ENCODE measurements at regions of chr12 and their contacts with region 1.

Region 1: GRCh38 chr12:55142669-55143565 is 16.7 kb downstream of the OR9K2 start:
- DNase-seq: peak; percentile 69
- H3K4me3 Mint-ChIP-seq: no peak overlapping the region
- H3K27ac Mint-ChIP-seq: no peak overlapping the region
- H3K4me1 Mint-ChIP-seq: no peaks in the 10 kb centered on the region
- H3K27me3 Mint-ChIP-seq: no peaks in the 10 kb centered on the region
- CTCF ChIP-seq: peak; percentile 63

Region 2: DNA sequence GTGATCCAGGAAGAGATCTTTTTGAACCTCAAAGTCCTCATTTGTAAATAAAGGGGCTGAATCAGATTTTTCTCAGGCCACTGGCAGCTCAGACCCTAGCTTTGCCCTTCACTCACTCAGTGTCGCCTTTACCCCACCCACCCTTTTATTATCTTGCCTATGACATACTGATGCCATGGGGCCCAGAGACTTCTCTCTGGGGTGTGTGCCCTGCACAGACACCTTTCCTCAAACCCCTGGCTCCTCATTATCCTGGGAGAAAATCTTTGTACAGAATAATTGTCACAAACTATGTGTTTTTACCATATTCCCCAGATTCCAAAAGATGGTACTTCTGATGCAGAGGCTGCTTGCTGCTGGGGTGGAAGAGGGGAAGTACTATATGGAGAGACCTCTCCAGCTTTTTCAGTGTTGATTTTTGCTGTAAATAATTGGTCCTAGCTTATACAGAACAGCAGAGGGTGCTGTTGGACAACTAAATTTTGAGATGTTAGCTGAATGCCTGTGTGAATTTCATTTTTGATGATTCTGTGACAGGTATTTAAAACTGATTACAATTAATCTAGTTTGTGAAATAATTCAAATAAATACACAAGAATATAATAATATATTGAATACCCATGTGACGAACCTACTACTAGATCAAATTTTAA is 440.9 kb before region 1 on chr12:
- CTCF ChIA-PET with region 1: no interaction called
- intact Hi-C with region 1: loop called (anchors 5 kb)
- DNase-seq: peak; percentile 25
- H3K4me3 Mint-ChIP-seq: no peak overlapping the region
- H3K27ac Mint-ChIP-seq: no peak overlapping the region
- H3K4me1 Mint-ChIP-seq: no peaks in the 10 kb centered on the region
- H3K27me3 Mint-ChIP-seq: peaks cover 76% of the 10 kb centered on the region
- CTCF ChIP-seq: peak; percentile 50

Region 3: DNA sequence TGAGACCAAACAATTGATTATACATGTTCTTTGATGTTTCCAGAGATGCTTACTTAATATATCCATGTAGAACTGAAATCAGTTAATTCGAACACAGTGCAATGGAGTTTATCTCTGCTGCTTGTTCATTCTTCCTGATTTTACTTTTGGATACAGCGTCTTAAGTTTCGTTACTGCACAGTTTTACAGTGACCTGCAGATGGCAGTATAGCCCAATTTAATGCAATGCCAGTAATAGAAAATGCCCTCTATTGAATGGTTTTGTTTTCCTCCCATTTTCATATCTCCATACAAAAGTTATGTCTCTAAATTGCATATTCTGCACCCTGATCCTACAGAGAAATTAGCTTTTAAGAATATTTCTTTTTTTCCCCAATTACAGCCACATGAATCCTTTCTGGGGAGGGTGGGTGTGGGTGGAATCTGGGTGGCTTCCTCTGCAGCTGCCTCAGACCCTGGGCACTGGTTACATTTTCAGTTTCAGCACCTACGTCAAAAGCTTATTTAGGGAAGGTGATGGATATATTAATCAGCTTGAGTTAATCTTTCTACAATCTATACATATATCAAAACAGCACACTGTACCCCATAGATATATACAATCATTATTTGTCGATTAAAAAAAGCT is 393.6 kb before region 1 on chr12:
- CTCF ChIA-PET with region 1: no interaction called
- intact Hi-C with region 1: loop called (anchors 1 kb)
- DNase-seq: peak; percentile 59
- H3K4me3 Mint-ChIP-seq: no peak overlapping the region
- H3K27ac Mint-ChIP-seq: no peak overlapping the region
- H3K4me1 Mint-ChIP-seq: no peaks in the 10 kb centered on the region
- H3K27me3 Mint-ChIP-seq: peaks cover 42% of the 10 kb centered on the region
- CTCF ChIP-seq: peak; percentile 78

Region 4: GRCh38 chr12:54840317-54840771 is 302.6 kb before region 1 on chr12:
- CTCF ChIA-PET with region 1: no interaction called
- intact Hi-C with region 1: loop called (anchors 10 kb)
- DNase-seq: no peak
- H3K4me3 Mint-ChIP-seq: no peak overlapping the region
- H3K27ac Mint-ChIP-seq: no peak overlapping the region
- H3K4me1 Mint-ChIP-seq: no peaks in the 10 kb centered on the region
- H3K27me3 Mint-ChIP-seq: peaks cover 29% of the 10 kb centered on the region
- CTCF ChIP-seq: no peak

Region 5: GRCh38 chr12:54993161-54993835 is 149.6 kb before region 1 on chr12:
- CTCF ChIA-PET with region 1: interaction called, 3 read pairs
- intact Hi-C with region 1: loop called (anchors 1 kb)
- DNase-seq: peak; percentile 60
- H3K4me3 Mint-ChIP-seq: no peak overlapping the region
- H3K27ac Mint-ChIP-seq: no peak overlapping the region
- H3K4me1 Mint-ChIP-seq: no peaks in the 10 kb centered on the region
- H3K27me3 Mint-ChIP-seq: peaks cover 67% of the 10 kb centered on the region
- CTCF ChIP-seq: peak; percentile 75

Region 6: DNA sequence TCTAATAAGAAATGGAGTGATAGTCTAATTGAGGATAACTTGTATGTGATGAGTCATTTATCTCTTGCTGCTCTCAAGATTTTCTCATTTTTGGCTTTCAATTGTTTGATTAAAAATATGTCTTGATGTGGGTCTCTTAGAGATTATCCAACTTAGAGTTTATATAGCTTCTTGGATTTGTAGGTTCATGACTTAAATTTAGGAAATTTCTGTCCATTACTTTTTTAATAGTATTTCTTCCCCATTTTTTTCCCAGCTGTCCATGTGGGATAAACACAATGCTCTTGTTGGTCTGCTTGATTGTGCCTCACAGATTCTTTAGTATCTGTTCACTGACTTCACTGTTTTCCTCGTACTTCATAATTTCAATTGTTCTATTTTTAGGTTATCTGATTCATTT is 264.9 kb after region 1 on chr12:
- CTCF ChIA-PET with region 1: no interaction called
- intact Hi-C with region 1: no loop called
- DNase-seq: no peak
- H3K4me3 Mint-ChIP-seq: no peak overlapping the region
- H3K27ac Mint-ChIP-seq: no peak overlapping the region
- H3K4me1 Mint-ChIP-seq: no peaks in the 10 kb centered on the region
- H3K27me3 Mint-ChIP-seq: no peaks in the 10 kb centered on the region
- CTCF ChIP-seq: no peak

Measured in Calu3 (cell line).